ENCODE measurements at regions of chr11 and their contacts with region 1.

Region 1: GRCh38 chr11:67317205-67317887 is 14.0 kb downstream of the SSH3 start:
- DNase-seq: peak; percentile 97
- ATAC-seq: peak; percentile 94 to 96
- H3K4me3 ChIP-seq: peak overlapping the region; percentile 95
- H3K27ac ChIP-seq: peak overlapping the region; percentile 96
- H3K4me1 ChIP-seq: peaks cover 30% of the 10 kb centered on the region
- H3K27me3 ChIP-seq: no peaks in the 10 kb centered on the region
- CTCF ChIP-seq: peak; percentile 97

Region 2: DNA sequence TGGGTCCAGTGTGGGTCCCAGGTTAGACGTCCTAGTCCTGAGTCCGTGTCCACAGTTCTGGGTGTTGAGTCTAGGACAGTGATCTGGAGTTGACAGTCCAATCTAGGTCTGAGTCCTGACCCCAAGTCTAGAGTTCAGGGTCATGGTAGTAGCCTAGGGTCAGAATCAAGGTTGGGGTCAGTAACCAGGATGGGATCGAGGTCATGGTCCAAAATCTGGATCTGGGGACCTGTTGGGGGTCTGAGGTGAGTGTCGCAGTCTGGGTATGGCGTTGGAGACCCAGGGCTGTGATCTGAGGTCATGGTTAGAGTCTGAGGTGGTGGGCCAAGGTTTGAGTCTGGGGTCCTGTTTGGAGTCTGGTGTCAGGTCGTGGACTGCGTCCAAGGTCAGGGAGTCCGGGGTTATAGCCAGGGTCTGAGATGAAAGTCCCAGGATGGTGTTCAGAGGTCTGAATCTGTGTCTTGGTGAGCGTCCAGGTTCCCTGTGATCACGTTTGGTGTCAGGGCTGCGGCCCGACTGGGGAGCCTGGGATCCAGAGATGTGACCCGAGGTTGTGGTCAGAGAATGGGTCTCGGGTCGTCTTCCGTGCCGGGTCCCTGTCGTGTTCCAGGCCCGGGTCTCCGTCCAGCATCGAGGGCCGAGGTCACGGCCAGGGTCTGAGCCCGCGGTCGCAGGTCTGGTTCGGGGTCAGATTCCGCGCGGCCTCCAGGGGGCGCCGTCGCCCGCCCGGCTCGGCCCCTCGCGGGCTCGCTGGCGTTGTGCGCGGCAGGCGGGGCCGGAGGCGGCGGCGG is 51.5 kb before region 1 on chr11:
- intact Hi-C with region 1: loop called (anchors 10 kb)
- DNase-seq: peak; percentile 88
- ATAC-seq: peak; percentile 73 to 80
- H3K4me3 ChIP-seq: peak overlapping the region; percentile 29
- H3K27ac ChIP-seq: peak overlapping the region; percentile 60
- H3K4me1 ChIP-seq: peaks cover 68% of the 10 kb centered on the region
- H3K27me3 ChIP-seq: no peaks in the 10 kb centered on the region
- CTCF ChIP-seq: peak; percentile 65

Region 3: GRCh38 chr11:67391304-67392132 is 74.2 kb after region 1 on chr11 and contains the start of gene RAD9A:
- intact Hi-C with region 1: no loop called
- DNase-seq: peak; percentile 97
- ATAC-seq: peak; percentile 90 to 94
- H3K4me3 ChIP-seq: peak within 1 kb of the TSS; percentile 96
- H3K27ac ChIP-seq: peak within 1 kb of the TSS; percentile 91
- H3K4me1 ChIP-seq: peaks cover 16% of the 10 kb centered on the region
- H3K27me3 ChIP-seq: no peaks in the 10 kb centered on the region
- CTCF ChIP-seq: no peak
- total RNA-seq, gene RAD9A: 28.9 TPM